Ascending aorta (tissue), 2 donors: ENCODE measurements at regions of chr21 and their contacts with region 1.

Region 1: GRCh38 chr21:26153758-26154157 is 16.8 kb downstream of the APP start:
- DNase-seq: no peak
- H3K4me3 ChIP-seq: no peak overlapping the region
- H3K27ac ChIP-seq: peak overlapping the region in 1 of 2 donors; percentile 3
- H3K4me1 ChIP-seq: peaks cover 0 to 14% of the 10 kb centered on the region in 2 donors
- H3K27me3 ChIP-seq: no peaks in the 10 kb centered on the region
- CTCF ChIP-seq: no peak

Region 2: GRCh38 chr21:25925936-25926335 is 227.8 kb before region 1 on chr21:
- intact Hi-C with region 1: loop called (anchors 5 kb)
- DNase-seq: no peak
- H3K4me3 ChIP-seq: no peak overlapping the region
- H3K27ac ChIP-seq: peak overlapping the region; percentile 86 to 92
- H3K4me1 ChIP-seq: peaks cover 4 to 46% of the 10 kb centered on the region in 2 donors
- H3K27me3 ChIP-seq: no peaks in the 10 kb centered on the region
- CTCF ChIP-seq: no peak